Posterior cingulate gyrus (tissue), 11 donors: ENCODE measurements at regions of chr1 and their contacts with region 1.

Region 1: DNA sequence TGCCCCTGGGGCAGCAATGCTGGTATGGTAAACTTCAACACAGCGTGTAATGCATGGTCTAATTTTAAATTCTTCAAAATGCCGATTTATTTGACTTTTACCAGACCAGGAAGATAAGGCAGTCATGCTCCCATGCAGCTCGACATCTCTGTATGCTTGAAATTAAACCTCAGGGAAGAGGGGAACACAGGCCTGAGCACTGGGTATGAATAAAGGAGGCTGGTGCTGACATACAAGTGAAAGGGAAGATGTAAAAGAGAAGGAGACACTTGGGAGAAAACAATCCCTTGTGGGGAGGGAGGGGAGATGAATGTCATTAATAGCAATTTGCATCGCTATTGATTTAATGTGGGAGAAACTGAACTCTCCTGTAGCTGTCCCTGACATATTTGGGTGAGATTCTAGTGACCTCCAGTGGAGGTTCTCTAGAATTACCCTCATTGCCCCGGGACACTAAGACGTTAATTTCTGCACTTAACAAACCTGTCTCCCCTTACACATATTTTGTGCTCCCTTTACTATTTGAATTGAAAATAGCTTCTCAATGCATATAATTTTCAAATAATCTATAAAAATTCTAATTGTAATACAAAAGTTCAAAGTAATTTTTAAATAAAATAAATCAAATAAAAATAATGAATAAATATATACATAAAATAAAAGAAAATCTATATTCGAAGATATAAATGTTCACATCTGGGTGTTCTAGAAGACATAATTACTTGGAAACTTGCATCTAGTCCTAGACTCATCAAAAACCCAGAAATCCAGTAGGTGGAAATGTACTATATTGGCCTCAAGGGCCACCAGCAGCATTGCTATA is 283.1 kb downstream of the LMX1A start:
- DNase-seq: no peak

Region 2: GRCh38 chr1:163361123-163361934 is 1712.1 kb before region 1 on chr1:
- intact Hi-C with region 1: loop called (anchors 5 kb)
- DNase-seq: peak in 1 of 10 donors; percentile 21

Region 3: GRCh38 chr1:163406772-163407171 is 1666.6 kb before region 1 on chr1:
- intact Hi-C with region 1: loop called (anchors 5 kb)
- DNase-seq: no peak

Region 4: DNA sequence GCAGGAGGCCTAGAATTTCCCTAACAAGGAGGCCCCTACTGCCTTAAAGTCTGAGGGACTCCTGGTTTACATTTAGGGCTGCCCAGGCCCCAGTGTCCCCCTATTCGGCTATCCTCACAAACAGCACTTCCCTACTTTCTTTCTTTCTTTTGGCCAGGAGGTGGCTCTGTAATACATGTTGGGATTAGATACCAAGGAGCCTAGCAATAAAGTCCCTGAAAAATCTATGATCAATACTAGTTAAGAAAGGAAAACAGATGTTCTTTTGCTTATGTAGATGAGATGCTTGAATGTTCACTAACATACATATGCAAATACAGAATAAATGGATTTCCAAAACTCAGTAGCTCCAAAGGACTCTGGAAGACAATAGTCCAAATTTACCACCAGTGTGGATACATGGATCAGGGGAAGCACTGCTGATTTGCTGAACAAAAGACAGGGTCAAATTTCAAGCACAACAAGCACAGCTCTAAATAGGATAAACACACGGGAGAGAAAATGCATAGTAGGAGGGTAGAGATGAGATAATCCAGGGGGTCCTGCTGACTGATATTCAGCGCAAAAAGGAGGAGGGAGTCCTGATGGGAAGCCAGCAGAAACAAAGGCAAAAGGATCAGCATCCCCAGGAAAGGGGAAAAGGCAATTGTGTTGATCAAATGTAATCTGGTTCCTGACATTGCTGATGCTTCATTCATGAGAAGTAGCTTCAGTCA is 1511.7 kb before region 1 on chr1:
- intact Hi-C with region 1: loop called (anchors 5 kb)
- DNase-seq: no peak

Region 5: DNA sequence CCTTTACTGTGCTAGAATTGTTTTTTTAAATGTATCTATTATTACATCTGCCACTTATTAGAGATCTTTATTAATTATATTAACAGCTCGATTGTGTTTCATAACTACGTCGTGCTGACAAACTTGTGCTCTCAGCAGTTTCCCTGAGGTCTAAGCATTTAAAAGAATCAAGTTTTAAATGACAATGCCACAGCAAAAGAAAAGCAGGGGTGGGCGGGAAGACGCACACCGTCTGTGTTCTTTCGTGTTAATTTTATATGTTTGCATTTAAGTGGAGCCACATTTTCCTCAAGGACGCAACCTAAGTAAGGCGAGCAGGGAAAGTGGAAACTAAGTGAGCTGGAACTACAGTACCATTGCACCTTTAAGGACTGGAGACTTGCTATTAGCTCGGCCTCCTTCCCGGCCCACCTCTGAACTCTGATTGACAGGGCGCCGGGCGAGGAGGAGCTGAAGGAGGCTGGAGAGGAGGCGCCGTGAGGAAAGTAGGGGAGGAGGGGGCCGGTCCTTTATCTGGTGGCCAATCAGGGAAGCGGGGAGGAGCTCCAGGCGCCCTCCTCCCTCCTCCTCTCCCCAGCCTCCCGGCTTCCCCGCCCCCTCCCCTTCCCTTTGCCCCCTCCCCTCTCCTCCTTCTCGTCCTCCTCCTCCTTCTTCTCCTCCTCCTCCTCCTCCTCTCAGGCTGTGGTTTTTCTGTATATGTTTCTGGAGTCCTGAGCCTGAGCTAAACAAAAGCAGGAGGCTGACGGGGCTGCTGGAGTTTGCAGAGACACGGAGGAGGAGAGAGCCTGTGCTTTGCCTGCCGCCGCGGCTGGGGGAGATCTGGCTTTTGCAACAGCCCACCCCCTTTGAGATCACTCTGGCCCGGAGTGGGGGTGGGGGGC is 514.7 kb before region 1 on chr1 and contains the start of gene PBX1:
- intact Hi-C with region 1: loop called (anchors 5 kb)
- DNase-seq: peak; percentile 90 to 100 (median 96)

Region 6: GRCh38 chr1:164786980-164787833 is 286.2 kb before region 1 on chr1:
- intact Hi-C with region 1: loop called (anchors 10 kb)
- DNase-seq: peak; percentile 77 to 98 (median 88)

Region 7: DNA sequence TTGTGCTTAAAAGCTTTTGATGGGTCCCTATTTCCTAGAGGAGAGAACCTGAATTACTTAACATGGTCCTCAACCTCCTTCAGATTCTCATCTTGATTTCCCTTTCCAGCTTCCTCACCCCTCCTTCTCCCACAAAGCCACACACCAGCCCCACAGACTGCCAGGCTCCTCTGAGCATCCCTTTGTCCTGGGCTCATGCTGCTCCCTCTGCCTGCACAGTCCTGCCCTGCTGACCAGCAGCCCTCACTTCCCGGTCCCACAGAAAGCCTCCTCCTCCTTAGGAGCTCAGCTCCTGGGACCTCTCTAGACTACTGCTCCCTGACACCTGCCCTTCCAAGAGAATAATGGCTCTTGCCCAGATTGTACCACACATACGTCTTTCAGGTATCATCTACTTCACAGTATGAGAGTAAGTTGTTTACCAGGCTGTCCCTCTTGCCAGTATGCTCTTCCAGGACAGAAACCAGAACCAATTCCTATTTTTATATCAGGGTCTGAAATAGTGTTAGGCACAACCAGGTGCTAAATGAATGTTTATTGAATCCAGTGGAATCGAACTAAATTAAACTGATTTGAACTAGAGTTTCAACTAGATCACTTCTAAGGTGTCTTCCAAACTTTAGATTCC is 90.3 kb before region 1 on chr1:
- intact Hi-C with region 1: loop called (anchors 5 kb)
- DNase-seq: peak in 9 of 10 donors; percentile 25 to 94 (median 63)

Region 8: DNA sequence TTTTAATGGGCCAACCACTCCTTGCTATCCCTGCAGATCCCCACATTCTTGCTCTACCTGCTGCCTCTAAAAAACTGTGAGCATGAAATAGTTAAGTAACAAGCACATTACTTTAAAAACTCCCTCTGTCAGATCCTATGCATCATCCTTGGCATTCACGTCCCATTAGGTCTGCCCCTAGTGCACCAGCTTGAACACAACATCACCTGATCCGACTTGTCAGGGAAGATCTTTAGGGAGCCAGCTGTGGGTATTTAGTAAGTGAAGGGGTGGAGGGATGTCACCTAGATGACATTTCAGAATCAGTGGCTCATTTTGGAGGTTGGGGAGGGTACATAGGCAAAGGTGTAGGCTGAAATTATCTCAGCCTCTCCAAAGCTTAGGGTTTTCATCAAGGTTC is 338.0 kb after region 1 on chr1:
- intact Hi-C with region 1: no loop called
- DNase-seq: no peak